Dorsolateral prefrontal cortex (tissue), 120 donors: ENCODE measurements at regions of chr6 and their contacts with region 1.

Region 1: DNA sequence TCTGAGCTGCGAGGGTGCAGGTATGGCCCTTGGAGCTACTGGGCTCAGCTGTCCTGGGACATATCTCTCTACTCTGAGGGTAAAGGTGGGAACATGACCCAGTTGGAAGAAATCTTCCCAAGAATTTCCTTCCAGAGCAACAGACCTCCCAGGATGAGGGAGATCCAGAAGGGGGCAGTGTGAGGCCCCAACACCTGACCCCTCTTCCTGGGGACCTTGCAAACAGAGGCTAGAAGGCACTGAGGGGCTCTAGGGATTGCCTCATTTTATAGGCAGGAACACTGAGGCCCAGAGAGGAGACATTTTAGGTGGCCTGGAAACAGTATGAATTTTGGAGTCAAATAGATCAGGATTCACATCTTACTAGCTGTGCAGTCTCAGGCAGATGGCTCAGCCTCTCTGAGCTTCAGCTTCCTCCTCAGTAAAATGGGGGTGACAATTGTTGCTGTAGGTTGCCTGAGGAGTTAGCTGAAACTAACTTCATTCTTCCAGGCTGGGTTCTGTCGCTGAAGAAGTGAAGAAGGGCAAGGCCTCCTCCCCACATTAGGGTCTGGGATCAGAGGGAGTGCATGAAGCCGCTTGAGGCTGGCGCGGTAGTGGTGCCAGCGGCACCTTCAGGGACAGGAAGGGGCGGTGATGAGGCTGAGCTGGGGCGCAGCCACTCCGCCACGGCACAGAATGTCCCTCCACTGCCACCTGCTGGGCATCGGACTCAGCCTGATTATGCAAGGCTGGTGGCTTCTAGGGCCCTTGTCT is 11.4 kb downstream of the KCNK17 start:
- DNase-seq: peak; percentile 22 to 85 (median 78)
- H3K4me3 ChIP-seq: peak overlapping the region in 15 of 59 donors; percentile 6 to 43 (median 28)
- H3K27ac ChIP-seq: no peak overlapping the region
- H3K27me3 ChIP-seq: peaks cover 0 to 9% (median 0%) of the 10 kb centered on the region in 45 donors
- CTCF ChIP-seq: peak; percentile 67 to 96 (median 91)

Region 2: GRCh38 chr6:38871741-38872568 is 430.9 kb before region 1 on chr6:
- intact Hi-C with region 1: loop called (anchors 2 to 10 kb)
- DNase-seq: peak in 7 of 10 donors; percentile 12 to 64 (median 55)
- H3K4me3 ChIP-seq: no peak overlapping the region
- H3K27ac ChIP-seq: no peak overlapping the region
- H3K27me3 ChIP-seq: peaks cover 0 to 12% (median 0%) of the 10 kb centered on the region in 45 donors
- CTCF ChIP-seq: peak; percentile 42 to 92 (median 82)

Region 3: DNA sequence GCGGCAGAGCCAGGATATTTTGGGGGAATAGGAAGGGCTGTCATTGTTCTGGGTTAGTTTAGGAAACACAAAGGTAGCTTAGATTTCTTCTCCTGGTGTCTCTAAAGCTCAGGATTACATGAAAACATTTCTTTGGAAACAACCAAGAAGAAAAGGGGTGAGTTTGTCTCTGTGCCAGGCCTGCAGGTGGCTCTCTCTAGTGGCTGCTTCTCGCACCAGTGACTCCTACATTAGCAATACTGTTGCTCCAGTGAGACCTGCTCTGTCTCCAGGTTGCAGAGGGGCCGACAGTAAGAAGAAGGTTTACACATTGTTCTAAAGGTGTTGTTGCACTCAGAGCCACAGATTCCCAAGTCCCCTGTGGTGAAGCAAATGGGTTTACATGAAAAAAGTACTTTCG is 358.9 kb before region 1 on chr6:
- intact Hi-C with region 1: no loop called
- DNase-seq: no peak
- H3K4me3 ChIP-seq: no peak overlapping the region
- H3K27ac ChIP-seq: no peak overlapping the region
- H3K27me3 ChIP-seq: no peaks in the 10 kb centered on the region
- CTCF ChIP-seq: no peak

Region 4: DNA sequence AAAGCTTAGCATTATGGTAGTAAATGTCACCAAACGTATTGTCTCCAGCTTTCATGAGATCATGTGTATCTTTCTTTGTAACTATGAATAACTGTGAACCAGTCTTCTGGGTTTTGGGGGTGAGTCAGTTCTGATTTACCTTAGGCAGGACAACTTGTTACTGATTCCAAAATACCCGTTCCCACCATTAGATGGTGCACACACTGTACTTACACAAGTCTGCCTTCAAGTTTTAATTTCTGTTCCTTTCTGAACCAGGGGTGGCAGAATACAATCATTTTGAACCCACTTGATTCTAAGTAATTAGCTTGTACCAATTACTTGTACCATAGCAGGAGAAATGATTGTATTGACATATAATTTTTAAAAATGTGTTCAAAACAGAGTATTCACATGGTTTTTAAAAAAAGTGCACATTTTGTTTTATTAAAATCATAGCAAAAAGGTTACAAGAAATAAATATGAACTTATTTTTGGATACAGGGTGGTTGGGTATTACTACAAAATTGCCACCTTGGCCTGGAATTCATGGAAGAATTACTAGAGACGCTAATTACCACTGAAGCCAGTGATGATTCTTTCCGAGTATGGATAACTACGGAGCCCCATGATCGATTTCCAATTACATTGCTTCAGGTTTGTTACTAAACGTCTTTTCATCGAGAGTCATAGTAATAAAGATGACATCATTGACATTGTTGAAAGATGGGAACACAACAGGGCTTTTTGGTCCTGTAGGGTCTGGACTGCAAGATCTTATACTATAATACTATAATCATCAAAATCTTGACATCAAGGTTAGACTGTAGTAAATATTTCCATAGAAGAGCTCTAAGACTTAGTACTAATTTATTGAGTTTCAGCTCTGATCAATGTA is 329.4 kb before region 1 on chr6:
- intact Hi-C with region 1: loop called (anchors 5 to 10 kb)
- DNase-seq: no peak
- H3K4me3 ChIP-seq: no peak overlapping the region
- H3K27ac ChIP-seq: no peak overlapping the region
- H3K27me3 ChIP-seq: peaks cover 0 to 18% (median 0%) of the 10 kb centered on the region in 45 donors
- CTCF ChIP-seq: peak in 55 of 56 donors; percentile 41 to 77 (median 59)

Region 5: GRCh38 chr6:39166189-39166911 is 136.5 kb before region 1 on chr6:
- intact Hi-C with region 1: loop called (anchors 1 to 2 kb)
- DNase-seq: peak; percentile 23 to 85 (median 68)
- H3K4me3 ChIP-seq: no peak overlapping the region
- H3K27ac ChIP-seq: no peak overlapping the region
- H3K27me3 ChIP-seq: peaks cover 0 to 13% (median 0%) of the 10 kb centered on the region in 45 donors
- CTCF ChIP-seq: peak; percentile 62 to 96 (median 90)